ENCODE measurements at regions of chr7 and their contacts with region 1.

Region 1: GRCh38 chr7:141654551-141654950 is 47.4 kb downstream of the DENND11 start:
- DNase-seq: no peak
- ATAC-seq: peak; percentile 67
- H3K4me3 Mint-ChIP-seq: no peak overlapping the region
- H3K27ac Mint-ChIP-seq: peak overlapping the region; percentile 72
- H3K4me1 Mint-ChIP-seq: peaks cover 15% of the 10 kb centered on the region
- H3K27me3 Mint-ChIP-seq: no peaks in the 10 kb centered on the region
- CTCF ChIP-seq: no peak

Region 2: GRCh38 chr7:140810830-140811556 is 843.6 kb before region 1 on chr7:
- CTCF ChIA-PET with region 1: interaction called, 9 read pairs
- POLR2A ChIA-PET with region 1: interaction called, 3 read pairs
- intact Hi-C with region 1: loop called (anchors 1 kb)
- DNase-seq: peak; percentile 30
- ATAC-seq: peak; percentile 84
- H3K4me3 Mint-ChIP-seq: no peak overlapping the region
- H3K27ac Mint-ChIP-seq: peak overlapping the region; percentile 59
- H3K4me1 Mint-ChIP-seq: peaks cover 1% of the 10 kb centered on the region
- H3K27me3 Mint-ChIP-seq: no peaks in the 10 kb centered on the region
- CTCF ChIP-seq: no peak

Region 3: DNA sequence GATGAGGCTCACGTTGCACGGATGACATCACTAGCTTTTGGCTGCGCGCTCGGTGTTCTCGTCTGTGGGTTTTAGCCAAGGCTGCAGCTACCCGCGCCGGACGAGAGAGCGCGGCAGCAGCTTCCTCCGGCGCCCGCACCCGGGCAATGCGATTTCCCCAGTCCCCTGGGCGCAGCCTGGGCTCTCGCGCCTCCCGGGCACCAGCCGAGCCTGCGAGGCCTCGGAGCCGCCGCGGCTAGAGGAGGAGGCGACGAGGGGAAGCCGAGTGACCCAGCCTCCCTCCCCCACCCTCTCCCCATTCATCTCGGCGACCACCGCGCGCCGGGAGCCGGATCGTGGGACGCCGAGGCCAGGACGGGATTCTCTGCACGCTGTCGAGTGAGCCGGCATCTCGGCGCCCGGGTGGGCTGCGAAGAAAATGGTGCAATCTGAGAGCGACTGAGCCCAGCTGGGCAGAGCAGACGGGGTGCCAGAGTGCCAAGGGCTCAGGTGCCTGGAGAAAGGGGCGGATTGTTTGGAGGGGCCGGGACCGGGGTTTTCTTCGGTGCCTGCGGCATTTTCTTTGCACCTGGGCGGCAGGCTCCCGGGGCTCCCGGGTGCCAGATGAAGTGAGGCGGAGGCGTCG is 581.9 kb before region 1 on chr7:
- CTCF ChIA-PET with region 1: no interaction called
- POLR2A ChIA-PET with region 1: no interaction called
- intact Hi-C with region 1: loop called (anchors 10 kb)
- DNase-seq: no peak
- ATAC-seq: no peak
- H3K4me3 Mint-ChIP-seq: peak overlapping the region; percentile 67
- H3K27ac Mint-ChIP-seq: no peak overlapping the region
- H3K4me1 Mint-ChIP-seq: peaks cover 26% of the 10 kb centered on the region
- H3K27me3 Mint-ChIP-seq: peaks cover 48% of the 10 kb centered on the region
- CTCF ChIP-seq: no peak

Region 4: DNA sequence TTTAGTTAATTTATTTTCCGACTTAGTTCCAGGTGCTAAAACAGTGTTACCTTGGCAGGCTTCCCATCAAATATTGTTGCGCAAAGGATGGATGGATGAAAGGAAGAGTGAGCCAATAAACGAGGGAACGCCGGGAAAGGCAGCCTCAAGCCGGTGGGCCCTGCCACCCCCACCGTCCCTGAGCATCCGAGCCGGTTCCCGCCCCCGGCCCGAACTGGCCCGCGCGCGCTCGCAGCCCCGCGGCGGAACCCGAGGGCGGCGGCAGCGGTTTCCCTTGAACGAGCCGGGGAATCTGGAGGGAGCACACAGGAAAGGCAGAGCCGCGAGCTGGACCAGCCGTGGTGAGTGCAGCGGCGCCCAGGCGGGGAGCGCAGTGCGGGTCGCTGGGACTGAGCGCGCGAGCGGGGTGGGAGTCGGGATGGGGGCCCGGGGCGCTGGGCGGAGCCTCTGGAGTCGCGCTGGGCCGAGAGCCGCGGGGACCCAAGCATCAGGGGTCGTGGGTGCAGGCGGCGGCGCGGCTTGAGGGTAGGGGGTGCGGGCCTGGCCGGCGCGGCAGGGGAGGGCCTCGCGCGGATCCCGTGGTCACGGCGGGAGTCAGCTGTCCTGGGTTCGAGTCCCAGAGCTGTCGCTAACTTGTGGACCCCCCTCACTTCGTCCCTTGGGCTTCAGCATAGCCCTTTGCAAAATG is 103.3 kb before region 1 on chr7 and contains the start of gene AGK:
- CTCF ChIA-PET with region 1: no interaction called
- POLR2A ChIA-PET with region 1: interaction called, 18 read pairs
- intact Hi-C with region 1: loop called (anchors 5 kb)
- DNase-seq: peak; percentile 69
- ATAC-seq: peak; percentile 94
- H3K4me3 Mint-ChIP-seq: peak within 1 kb of the TSS; percentile 90
- H3K27ac Mint-ChIP-seq: peak within 1 kb of the TSS; percentile 54
- H3K4me1 Mint-ChIP-seq: peaks cover 29% of the 10 kb centered on the region
- H3K27me3 Mint-ChIP-seq: no peaks in the 10 kb centered on the region
- CTCF ChIP-seq: no peak
- total RNA-seq, gene AGK: 35.1 and 39.3 TPM in 2 replicates

Region 5: DNA sequence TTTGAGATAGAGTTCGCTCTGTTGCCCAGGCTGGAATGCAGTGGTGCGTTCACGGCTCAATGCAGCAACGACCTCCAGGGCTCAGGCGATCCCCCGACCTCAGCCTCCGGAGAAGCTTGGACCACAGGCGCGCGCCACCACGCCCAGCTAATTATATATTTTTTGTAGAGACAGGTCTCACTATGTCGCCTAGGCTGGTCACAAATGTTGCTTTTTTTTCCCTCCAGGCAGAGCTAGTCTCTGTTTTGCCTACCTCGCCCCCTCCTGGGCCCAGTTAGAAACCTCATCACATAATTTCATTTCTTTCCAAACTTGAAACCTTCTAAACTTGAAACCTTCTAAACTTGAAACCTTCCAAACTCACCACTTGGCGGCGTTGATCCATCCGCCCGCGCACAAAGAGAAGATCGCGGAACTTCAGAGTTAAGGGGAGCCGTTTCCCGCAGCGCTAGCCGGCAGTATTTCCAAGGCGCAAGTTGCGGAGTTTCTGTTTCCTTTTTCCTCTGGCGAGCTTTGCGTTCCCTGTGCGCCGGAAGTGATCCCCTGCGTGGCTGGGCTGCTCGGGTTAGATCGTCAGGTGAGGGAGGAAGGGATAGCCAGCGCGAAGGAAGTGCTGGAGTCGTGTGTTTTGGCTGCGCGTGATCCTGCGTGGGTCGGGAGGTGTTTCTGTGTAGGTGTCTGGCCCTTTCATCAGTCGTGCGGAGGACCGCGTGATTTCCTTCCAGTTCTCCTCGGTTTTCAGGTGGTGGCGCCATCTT is 83.5 kb after region 1 on chr7 and contains the start of gene SSBP1:
- CTCF ChIA-PET with region 1: interaction called, 54 read pairs
- POLR2A ChIA-PET with region 1: interaction called, 8 read pairs
- intact Hi-C with region 1: loop called (anchors 1 kb)
- DNase-seq: peak; percentile 79
- ATAC-seq: peak; percentile 89
- H3K4me3 Mint-ChIP-seq: peak within 1 kb of the TSS; percentile 99
- H3K27ac Mint-ChIP-seq: peak within 1 kb of the TSS; percentile 98
- H3K4me1 Mint-ChIP-seq: peaks cover 40% of the 10 kb centered on the region
- H3K27me3 Mint-ChIP-seq: no peaks in the 10 kb centered on the region
- CTCF ChIP-seq: peak; percentile 80
- total RNA-seq, gene SSBP1: 122 and 146 TPM in 2 replicates

Measured in activated B cell treated with CpG ODN at 0.5 μM for 24 hours (primary cell).